ENCODE measurements at regions of chr7 and their contacts with region 1.

Region 1: GRCh38 chr7:151123822-151124464 is 37.7 kb downstream of the AGAP3 start:
- DNase-seq: peak; percentile 78 to 98 (median 89)

Region 2: DNA sequence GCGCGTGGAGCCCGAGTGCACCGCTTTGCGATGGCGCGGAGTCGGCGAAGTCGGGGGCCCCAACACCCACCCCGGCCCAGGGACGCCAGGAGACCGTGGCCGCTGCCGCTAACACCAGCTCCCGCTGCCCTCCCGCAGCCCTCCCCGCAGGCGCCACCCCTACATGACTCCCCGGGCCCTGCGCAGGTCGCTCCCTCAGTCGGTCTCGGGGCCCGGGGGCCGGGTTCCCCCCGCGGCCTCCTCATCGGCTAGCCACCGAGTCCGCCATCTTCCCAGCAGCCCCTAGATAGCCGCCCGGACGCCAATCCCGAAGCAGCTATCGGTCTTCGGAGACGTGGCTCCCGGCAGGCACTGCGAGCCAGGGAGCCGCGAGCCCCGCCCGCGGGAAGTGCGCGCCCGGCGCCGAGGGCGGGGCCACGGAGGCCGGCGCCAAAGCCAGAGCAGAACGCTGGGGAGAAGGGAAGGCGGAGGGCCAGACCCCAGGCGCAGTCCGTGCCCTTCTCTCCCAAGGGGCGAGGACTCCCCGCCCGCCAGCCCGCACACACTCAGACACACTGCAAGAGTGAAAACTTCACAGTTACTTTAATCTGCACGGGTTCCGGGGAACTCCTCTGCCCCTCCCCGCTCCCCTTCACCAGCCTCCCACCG is 43.3 kb before region 1 on chr7 and contains the start of gene FASTK:
- intact Hi-C with region 1: loop called (anchors 5 kb)
- DNase-seq: peak; percentile 90 to 99 (median 94)

Region 3: GRCh38 chr7:151172273-151173141 is 48.6 kb after region 1 on chr7:
- intact Hi-C with region 1: loop called (anchors 1 kb)
- DNase-seq: peak; percentile 68 to 98 (median 81)

Region 4: DNA sequence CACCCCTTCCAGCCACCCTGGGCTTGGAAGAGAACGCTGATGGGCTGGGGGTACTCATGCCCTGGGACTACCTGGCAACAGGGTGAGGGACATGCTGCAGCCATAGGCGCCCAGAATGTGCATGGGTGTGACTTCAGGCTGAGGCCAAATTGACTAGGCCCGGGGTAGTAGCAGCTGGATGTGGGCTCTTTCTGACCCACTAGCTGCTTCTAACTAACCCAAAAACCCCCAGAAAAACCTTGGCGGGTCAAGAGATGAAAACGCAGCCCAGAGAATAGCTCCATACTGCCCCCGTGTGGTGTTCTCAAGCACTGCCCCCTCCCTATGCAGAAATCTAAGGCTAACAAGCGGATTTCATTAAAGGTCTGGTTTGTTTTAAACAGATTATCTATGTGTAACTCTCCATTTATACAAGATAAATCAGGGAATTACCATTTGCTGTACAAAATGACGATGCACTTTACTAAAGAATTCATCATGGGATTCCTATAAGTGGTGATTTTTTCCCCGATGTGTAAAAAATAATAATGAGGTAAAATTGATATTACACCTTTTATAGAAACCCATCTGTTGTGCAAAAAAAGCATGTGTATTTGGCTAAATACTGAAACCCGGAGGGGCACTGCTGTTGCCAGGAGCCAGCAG is 120.4 kb after region 1 on chr7:
- intact Hi-C with region 1: loop called (anchors 5 kb)
- DNase-seq: peak in 4 of 10 donors; percentile 37 to 68 (median 56)

Region 5: GRCh38 chr7:151261529-151261928 is 137.6 kb after region 1 on chr7:
- intact Hi-C with region 1: no loop called
- DNase-seq: peak in 2 of 10 donors; percentile 25 to 44

Region 6: GRCh38 chr7:151304856-151305255 is 180.9 kb after region 1 on chr7:
- intact Hi-C with region 1: loop called (anchors 10 kb)
- DNase-seq: no peak